Activated CD4-positive, alpha-beta T cell treated with anti-CD3 and anti-CD28 coated beads, Interleukin-2, amount 10 ng/mL, durations not matched to agents 24 days and 14 days (primary cell): ENCODE measurements at regions of chr14 and their contacts with region 1.

Region 1: DNA sequence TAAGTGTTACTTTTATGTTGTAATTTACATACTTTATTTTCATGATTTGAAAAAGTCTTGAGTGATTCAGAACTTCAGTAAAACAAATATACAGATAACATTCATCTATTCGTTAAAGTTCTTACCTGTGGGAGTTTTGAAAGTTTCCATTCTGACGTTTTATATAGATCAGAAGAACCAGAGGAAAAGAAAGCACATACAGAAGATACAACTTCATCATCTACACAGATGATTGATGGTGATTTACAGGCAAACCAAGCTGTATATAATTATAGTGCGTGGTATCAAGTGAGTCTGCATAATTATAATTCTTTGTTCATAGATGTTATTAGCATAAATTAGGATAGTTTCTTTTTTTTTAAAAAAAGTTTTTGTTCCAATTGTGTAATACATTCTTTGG is 20.0 kb downstream of the FKBP3 start:
- DNase-seq: no peak
- H3K4me3 Mint-ChIP-seq: no peak overlapping the region
- H3K27ac Mint-ChIP-seq: peak overlapping the region; percentile 72
- H3K4me1 Mint-ChIP-seq: peaks cover 10% of the 10 kb centered on the region
- H3K27me3 Mint-ChIP-seq: no peaks in the 10 kb centered on the region

Region 2: DNA sequence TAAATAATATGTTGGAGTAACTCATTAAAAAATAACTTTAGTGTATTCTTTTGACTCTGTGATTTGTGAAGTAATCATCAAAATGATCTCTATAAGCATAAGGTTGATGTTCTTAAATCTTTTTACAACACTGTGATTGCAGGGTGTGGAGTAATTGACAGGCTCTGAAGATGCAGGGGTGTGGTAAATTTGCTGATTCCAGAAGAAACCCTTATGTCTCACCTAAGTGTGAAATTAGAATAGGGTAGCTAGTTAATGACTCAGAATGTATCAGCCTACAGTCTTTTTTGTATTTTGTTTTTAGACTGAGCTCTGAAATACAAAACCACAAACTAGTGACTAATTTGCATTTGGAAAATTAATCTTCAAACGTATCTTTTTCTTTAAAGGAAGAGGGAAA is 24.5 kb before region 1 on chr14:
- intact Hi-C with region 1: loop called (anchors 1 kb)
- DNase-seq: no peak
- H3K4me3 Mint-ChIP-seq: peak overlapping the region; percentile 27
- H3K27ac Mint-ChIP-seq: peak overlapping the region; percentile 78
- H3K4me1 Mint-ChIP-seq: peaks cover 47% of the 10 kb centered on the region
- H3K27me3 Mint-ChIP-seq: no peaks in the 10 kb centered on the region